Mammary epithelial cell (primary cell): ENCODE measurements at regions of chr5 and their contacts with region 1.

Region 1: DNA sequence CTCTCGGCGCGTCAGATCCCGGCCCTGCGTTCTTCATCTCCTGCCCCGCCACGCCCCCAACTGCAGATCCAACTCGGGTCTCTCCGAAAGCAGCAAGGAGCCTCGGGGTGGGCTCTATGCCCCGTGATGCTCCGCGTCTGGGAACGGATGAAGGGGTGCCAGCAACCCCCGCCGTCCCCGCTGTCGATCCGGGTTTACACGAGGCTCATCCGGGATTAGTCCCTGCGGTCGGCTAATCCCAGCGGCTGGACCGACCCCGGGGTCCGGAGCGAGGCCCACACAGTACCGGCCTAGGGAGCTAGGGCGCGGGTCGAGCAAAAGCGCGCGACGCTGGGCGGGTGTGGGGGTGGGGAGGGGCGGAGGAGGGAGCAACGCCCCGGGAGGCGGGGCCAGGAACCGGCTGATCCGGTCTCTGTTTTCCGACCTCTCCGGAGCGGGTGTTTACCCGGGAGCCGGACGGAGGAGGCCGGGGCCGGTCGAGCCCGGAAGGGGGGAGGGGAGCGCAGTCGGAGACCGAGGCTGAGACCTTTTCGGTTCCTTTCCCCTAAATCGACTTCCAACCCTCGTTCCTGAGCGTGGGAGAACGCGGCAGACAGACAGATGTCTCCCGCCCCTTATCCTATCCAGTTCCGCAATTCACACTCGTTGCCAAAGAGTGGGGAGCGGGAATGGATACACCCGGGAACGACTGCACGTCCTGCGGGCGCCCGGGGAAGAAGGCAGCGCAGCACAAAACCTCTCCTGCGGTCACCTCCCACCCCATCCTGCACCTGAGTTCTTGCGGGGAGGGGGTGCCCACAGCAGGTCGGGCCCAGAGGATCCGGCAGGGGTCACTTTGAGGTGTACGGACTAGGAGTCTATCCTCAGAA is 28.6 kb downstream of the PCDH1 start:
- DNase-seq: peak; percentile 84
- H3K4me3 ChIP-seq: peak overlapping the region; percentile 52 to 66 (median 60)
- H3K27ac ChIP-seq: peak overlapping the region; percentile 87
- H3K4me1 ChIP-seq: peaks cover 17% of the 10 kb centered on the region
- H3K27me3 ChIP-seq: no peaks in the 10 kb centered on the region
- CTCF ChIP-seq: peak in 1 of 2 donors; percentile 1

Region 2: DNA sequence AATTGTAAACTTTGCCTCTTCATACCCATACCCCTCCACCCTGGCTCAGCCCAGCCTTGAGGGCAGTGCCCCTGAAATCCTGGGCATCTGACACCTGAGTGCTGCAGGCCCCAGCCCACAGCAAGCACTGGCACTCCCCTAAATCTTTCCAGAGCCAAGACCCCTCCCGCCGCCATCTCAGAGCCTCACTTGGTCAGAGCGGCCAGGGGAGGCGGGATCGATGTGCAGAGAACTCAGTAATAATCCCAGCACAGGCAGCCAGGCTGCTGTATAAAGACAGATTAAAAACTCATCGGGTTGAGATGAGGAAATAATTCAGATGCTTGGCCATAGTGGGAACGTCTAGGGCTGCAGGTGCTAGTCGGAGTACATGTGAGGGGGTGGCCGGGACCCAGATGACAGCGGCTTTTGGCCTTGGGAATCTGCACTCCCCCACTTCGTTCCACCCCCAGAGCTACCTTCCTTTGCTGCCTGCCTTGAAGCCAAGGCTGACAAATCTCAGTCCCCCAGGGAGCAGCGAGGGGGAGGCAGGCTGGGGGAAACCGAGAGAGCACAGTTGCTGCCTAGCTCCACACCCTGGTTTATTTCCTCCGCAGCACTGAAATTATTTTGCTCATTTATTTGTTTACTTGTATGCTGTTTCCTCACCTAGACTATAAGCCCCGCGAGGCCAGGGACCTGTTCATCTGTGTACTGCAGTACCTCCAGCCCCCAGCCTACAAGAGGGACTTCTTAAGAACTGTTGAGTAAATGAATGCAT is 148.1 kb before region 1 on chr5:
- CTCF ChIA-PET with region 1: no interaction called
- dilution Hi-C with region 1: no loop called
- in situ Hi-C with region 1: no loop called
- intact Hi-C with region 1: loop called (anchors 1 kb)
- DNase-seq: no peak
- H3K4me3 ChIP-seq: no peak overlapping the region
- H3K27ac ChIP-seq: no peak overlapping the region
- H3K4me1 ChIP-seq: peaks cover 9% of the 10 kb centered on the region
- H3K27me3 ChIP-seq: peaks cover 5% of the 10 kb centered on the region
- CTCF ChIP-seq: no peak

Region 3: GRCh38 chr5:141869514-141869913 is 19.9 kb after region 1 on chr5:
- CTCF ChIA-PET with region 1: no interaction called
- dilution Hi-C with region 1: no loop called
- in situ Hi-C with region 1: no loop called
- intact Hi-C with region 1: loop called (anchors 2 kb)
- DNase-seq: peak; percentile 96
- H3K4me3 ChIP-seq: no peak overlapping the region
- H3K27ac ChIP-seq: peak overlapping the region; percentile 40
- H3K4me1 ChIP-seq: peaks cover 58% of the 10 kb centered on the region
- H3K27me3 ChIP-seq: no peaks in the 10 kb centered on the region
- CTCF ChIP-seq: no peak

Region 4: GRCh38 chr5:141945511-141946051 is 96.0 kb after region 1 on chr5:
- CTCF ChIA-PET with region 1: no interaction called
- dilution Hi-C with region 1: loop called (anchors 5 kb)
- in situ Hi-C with region 1: no loop called
- intact Hi-C with region 1: no loop called
- DNase-seq: no peak
- H3K4me3 ChIP-seq: no peak overlapping the region
- H3K27ac ChIP-seq: no peak overlapping the region
- H3K4me1 ChIP-seq: peaks cover 25% of the 10 kb centered on the region
- H3K27me3 ChIP-seq: no peaks in the 10 kb centered on the region
- CTCF ChIP-seq: no peak